ENCODE measurements at regions of chr17 and their contacts with region 1.

Region 1: DNA sequence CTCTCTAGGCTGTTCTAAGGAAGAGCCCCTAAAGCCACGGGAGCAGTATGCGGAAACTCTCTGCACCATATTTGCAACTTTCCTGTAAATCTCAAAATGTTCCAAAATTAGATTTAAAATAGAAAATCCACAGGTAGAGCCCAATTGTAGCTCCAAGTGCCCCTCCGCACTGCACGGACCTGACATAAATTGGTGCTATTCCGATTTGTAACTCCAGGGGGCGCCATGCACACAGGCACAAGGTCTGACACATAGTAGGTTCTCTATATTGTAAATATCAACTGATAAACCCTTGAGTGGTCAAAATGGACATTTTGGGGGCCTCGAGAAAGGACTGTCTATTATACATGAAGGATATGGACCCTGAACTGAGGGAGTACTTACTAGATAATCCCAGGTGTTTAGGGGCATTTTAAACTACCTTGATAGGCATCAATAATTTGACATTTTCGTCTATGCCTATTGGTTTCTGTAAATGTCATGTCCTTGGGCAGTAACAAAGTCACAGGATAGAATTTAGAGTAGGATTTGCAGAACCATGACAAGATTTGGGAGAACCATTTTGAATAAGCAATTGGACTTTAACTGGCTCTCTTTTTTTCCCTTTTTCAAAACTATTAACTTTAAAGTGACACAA is 36.6 kb upstream of the TMEM132E start:
- DNase-seq: no peak
- ATAC-seq: peak in 1 of 2 donors; percentile 36
- H3K4me3 ChIP-seq: no peak overlapping the region
- H3K27ac ChIP-seq: no peak overlapping the region
- H3K4me1 ChIP-seq: no peaks in the 10 kb centered on the region
- H3K27me3 ChIP-seq: peaks cover under 1% of the 10 kb centered on the region

Region 2: DNA sequence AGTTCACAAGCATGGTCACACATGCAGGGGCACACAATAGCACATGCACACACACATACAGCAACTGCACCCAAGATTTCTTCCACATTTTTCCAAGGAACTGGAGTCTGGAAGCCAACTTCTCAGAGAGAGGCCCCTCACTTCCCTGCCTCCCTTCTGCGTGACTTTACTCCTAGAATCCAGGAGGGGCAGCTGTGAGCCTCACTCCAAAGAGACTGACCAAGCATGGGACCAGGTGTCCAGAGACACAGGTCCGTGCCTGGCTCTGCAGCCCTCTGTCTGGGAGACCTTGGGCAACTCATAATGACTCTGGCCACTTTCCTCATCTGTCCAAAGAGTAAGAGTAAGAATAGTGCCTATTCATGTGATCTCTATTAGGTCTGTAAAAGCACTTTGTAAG is 68.1 kb before region 1 on chr17:
- intact Hi-C with region 1: no loop called
- DNase-seq: no peak
- ATAC-seq: no peak
- H3K4me3 ChIP-seq: no peak overlapping the region
- H3K27ac ChIP-seq: no peak overlapping the region
- H3K4me1 ChIP-seq: no peaks in the 10 kb centered on the region
- H3K27me3 ChIP-seq: no peaks in the 10 kb centered on the region

Region 3: GRCh38 chr17:34503528-34504145 is 39.2 kb before region 1 on chr17:
- intact Hi-C with region 1: no loop called
- DNase-seq: peak; percentile 51 to 81 (median 80)
- ATAC-seq: peak; percentile 85 to 89
- H3K4me3 ChIP-seq: no peak overlapping the region
- H3K27ac ChIP-seq: no peak overlapping the region
- H3K4me1 ChIP-seq: no peaks in the 10 kb centered on the region
- H3K27me3 ChIP-seq: no peaks in the 10 kb centered on the region

Region 4: DNA sequence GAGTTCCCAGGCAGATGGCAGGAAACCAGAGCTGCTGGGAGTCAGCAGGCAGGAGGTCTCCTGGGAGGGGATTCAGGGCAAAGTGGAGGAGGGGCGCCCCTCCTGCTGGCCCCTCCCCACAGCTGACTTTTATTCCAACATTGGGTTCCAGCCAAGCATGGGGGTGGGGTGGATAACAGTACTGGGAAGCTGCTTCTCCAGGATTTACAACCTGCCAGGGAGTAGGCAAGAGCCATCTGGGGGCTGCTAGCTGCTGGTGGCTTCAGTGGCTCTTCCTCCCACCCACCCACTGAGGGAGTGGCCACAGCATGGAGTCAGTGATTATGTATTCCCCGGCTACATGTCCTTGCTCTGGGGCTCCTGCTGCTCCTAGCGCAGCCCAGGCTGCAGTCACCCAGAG is 73.3 kb after region 1 on chr17:
- intact Hi-C with region 1: no loop called
- DNase-seq: no peak
- ATAC-seq: no peak
- H3K4me3 ChIP-seq: no peak overlapping the region
- H3K27ac ChIP-seq: no peak overlapping the region
- H3K4me1 ChIP-seq: no peaks in the 10 kb centered on the region
- H3K27me3 ChIP-seq: no peaks in the 10 kb centered on the region

Region 5: DNA sequence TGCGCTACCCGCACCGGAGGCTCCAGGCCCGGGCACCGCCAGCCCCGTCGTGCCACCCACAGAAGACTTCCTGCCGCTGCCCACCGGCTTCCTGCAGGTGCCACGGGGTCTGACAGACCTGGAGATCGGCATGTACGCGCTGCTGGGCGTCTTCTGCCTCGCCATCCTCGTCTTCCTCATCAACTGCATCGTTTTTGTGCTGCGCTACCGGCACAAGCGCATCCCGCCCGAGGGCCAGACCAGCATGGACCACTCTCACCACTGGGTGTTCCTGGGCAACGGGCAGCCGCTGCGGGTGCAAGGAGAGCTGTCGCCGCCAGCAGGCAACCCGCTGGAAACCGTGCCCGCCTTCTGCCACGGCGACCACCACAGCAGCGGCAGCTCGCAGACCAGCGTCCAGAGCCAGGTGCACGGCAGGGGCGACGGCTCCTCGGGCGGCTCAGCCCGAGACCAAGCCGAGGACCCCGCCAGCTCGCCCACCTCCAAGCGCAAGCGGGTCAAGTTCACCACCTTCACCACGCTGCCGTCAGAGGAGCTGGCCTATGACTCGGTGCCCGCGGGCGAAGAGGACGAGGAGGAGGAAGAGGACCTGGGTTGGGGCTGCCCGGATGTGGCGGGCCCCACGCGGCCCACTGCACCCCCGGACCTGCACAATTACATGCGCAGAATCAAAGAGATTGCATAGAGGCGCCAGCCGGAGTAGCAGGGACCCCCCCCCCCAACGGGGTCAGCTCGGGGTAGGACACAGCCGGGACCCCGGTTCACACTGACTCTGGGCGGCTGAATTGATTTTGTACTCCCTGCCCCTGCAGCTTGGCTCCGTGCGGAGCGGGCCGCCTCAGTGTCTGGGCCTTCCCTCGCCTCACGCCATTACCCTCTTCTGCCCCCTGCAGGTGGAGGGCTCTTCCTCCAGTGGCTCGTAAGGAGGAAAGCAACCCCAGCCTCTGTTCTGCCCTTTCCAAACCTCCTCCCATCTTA is 95.0 kb after region 1 on chr17:
- intact Hi-C with region 1: loop called (anchors 5 to 10 kb)
- DNase-seq: peak; percentile 79 to 91 (median 89)
- ATAC-seq: peak; percentile 90 to 94
- H3K4me3 ChIP-seq: peak overlapping the region; percentile 14
- H3K27ac ChIP-seq: no peak overlapping the region
- H3K4me1 ChIP-seq: no peaks in the 10 kb centered on the region
- H3K27me3 ChIP-seq: no peaks in the 10 kb centered on the region

Region 6: DNA sequence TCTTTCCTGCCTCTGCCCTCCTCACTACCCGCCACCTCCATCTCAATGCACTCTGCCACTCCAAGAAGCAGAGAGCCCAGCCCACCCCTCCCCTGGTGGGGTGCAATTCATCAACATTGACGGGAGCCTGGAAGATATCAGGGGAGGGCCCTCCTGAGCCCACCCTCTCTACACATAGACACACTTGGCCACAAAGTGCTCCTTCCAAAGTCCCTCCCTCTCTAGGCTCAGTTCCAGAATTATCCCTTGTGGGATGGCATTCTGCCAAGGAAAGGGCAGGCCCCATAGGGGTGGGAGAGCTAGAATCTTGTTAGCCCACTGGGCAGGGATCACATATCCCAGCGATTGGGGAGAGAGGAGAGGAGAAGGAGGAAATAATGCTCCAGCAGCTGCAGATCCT is 102.8 kb after region 1 on chr17:
- intact Hi-C with region 1: loop called in 1 of 4 experiments (anchors 10 kb)
- DNase-seq: no peak
- ATAC-seq: no peak
- H3K4me3 ChIP-seq: no peak overlapping the region
- H3K27ac ChIP-seq: no peak overlapping the region
- H3K4me1 ChIP-seq: no peaks in the 10 kb centered on the region
- H3K27me3 ChIP-seq: no peaks in the 10 kb centered on the region

Region 7: GRCh38 chr17:35119368-35120165 is 576.7 kb after region 1 on chr17 and contains the start of gene RAD51D:
- intact Hi-C with region 1: loop called in 3 of 4 experiments (anchors 2 to 5 kb)
- DNase-seq: peak; percentile 77 to 92 (median 91)
- ATAC-seq: peak; percentile 94 to 95
- H3K4me3 ChIP-seq: peak within 1 kb of the TSS; percentile 48
- H3K27ac ChIP-seq: peak within 1 kb of the TSS; percentile 4
- H3K4me1 ChIP-seq: peaks cover 3% of the 10 kb centered on the region
- H3K27me3 ChIP-seq: no peaks in the 10 kb centered on the region
- total RNA-seq, gene RAD51D: 5.8 to 7.1 (median 6.4) TPM